ENCODE measurements at regions of chr10 and their contacts with region 1.

Region 1: DNA sequence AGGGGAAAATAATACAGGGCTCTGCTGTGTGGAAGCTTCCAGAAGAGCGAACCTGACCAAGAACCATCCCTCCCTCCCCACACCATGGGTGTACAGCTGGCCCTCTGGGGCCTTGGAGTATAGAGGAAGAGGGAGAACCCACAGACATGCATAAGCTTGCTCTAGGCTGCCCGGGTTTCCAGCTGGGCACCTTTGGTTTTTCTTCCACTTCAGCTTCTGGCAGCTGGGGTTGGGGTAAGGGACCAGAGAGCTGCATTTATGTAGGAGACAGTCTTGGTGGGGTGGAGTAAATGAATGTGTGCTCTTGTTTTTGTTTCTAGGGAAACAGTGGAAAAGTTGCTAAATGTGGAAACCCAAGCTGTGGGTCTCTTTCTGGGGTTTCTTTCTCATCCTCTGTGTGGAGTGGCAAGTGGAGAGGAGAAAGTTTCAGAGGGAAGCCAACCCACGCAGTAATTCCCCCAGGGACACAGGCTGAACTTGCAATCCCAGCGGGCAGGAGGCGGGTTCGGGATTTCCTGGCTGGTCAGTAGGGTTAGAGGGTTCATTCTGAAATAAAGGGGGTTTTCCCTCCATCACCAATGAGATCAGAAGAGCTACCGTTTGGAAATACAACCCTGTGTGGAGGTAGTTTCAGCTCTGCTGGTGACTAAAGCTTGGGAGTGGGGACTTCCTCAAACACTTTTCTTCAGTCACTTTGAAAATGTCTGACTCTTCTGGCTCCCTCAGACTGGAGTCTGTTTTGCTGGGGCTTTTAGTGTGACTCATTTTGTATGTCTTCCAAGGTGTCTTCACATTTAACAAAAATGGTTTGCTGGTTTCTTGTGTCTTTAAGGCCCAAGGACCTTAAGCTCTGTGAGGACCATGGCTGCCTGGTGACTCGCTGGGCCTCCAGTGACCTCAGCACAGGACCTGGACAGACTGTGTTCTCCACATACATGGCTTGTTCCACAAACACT is 22.2 kb upstream of the SRGN start:
- DNase-seq: peak; percentile 67
- H3K4me3 Mint-ChIP-seq: peak overlapping the region; percentile 19
- H3K27ac Mint-ChIP-seq: peak overlapping the region; percentile 93
- H3K4me1 Mint-ChIP-seq: peaks cover 39% of the 10 kb centered on the region
- H3K27me3 Mint-ChIP-seq: no peaks in the 10 kb centered on the region

Region 2: DNA sequence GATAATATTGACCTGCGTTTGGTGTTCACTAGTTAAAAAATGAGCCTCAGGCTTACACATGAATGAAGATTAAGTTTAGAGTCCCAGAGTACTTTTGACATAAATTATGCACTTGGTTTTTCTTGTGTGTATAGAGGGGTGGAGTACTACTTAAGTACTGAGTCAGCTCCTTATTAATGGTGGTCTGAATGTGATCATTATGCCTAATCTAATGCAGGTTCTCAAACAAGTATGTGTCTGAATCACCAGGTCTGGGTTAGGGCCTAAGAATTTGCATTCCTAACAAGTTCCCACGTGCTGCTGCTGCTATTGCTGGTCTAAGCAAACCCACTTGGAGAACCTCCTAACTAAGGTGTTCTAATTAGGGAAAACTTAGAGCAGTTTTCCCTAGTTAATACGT is 269.1 kb before region 1 on chr10:
- CTCF ChIA-PET with region 1: no interaction called
- intact Hi-C with region 1: no loop called
- DNase-seq: no peak
- H3K4me3 Mint-ChIP-seq: no peak overlapping the region
- H3K27ac Mint-ChIP-seq: no peak overlapping the region
- H3K4me1 Mint-ChIP-seq: no peaks in the 10 kb centered on the region
- H3K27me3 Mint-ChIP-seq: no peaks in the 10 kb centered on the region

Region 3: GRCh38 chr10:69045441-69046300 is 20.0 kb before region 1 on chr10:
- CTCF ChIA-PET with region 1: interaction called, 6 read pairs
- intact Hi-C with region 1: loop called (anchors 1 kb)
- DNase-seq: peak; percentile 60
- H3K4me3 Mint-ChIP-seq: no peak overlapping the region
- H3K27ac Mint-ChIP-seq: peak overlapping the region; percentile 87
- H3K4me1 Mint-ChIP-seq: peaks cover 29% of the 10 kb centered on the region
- H3K27me3 Mint-ChIP-seq: no peaks in the 10 kb centered on the region

Region 4: GRCh38 chr10:69055241-69055640 is 10.4 kb before region 1 on chr10:
- CTCF ChIA-PET with region 1: interaction called, 9 read pairs
- intact Hi-C with region 1: loop called (anchors 1 kb)
- DNase-seq: no peak
- H3K4me3 Mint-ChIP-seq: no peak overlapping the region
- H3K27ac Mint-ChIP-seq: peak overlapping the region; percentile 52
- H3K4me1 Mint-ChIP-seq: peaks cover 44% of the 10 kb centered on the region
- H3K27me3 Mint-ChIP-seq: no peaks in the 10 kb centered on the region